Activated T-helper 2 cell treated with anti-CD3 and anti-CD28 coated beads, Interferon-gamma antibody, Interleukin-2, Interleukin-4, amounts not matched to agents 10 μg/mL and 5 μg/mL and 100 μg/mL, durations not matched to agents 14 hours and 24 hours and 36 hours (primary cell): ENCODE measurements at regions of chr7 and their contacts with region 1.

Region 1: GRCh38 chr7:104923010-104923421 is 91.0 kb upstream of the KMT2E start:
- DNase-seq: peak; percentile 61
- H3K4me3 Mint-ChIP-seq: no peak overlapping the region
- H3K27ac Mint-ChIP-seq: no peak overlapping the region
- H3K4me1 Mint-ChIP-seq: peaks cover 11% of the 10 kb centered on the region
- H3K27me3 Mint-ChIP-seq: peaks cover 4% of the 10 kb centered on the region

Region 2: GRCh38 chr7:104382616-104383015 is 540.4 kb before region 1 on chr7:
- intact Hi-C with region 1: no loop called
- DNase-seq: no peak
- H3K4me3 Mint-ChIP-seq: no peak overlapping the region
- H3K27ac Mint-ChIP-seq: no peak overlapping the region
- H3K4me1 Mint-ChIP-seq: no peaks in the 10 kb centered on the region
- H3K27me3 Mint-ChIP-seq: no peaks in the 10 kb centered on the region

Region 3: GRCh38 chr7:104643587-104644217 is 279.3 kb before region 1 on chr7:
- intact Hi-C with region 1: loop called (anchors 5 kb)
- DNase-seq: no peak
- H3K4me3 Mint-ChIP-seq: no peak overlapping the region
- H3K27ac Mint-ChIP-seq: no peak overlapping the region
- H3K4me1 Mint-ChIP-seq: no peaks in the 10 kb centered on the region
- H3K27me3 Mint-ChIP-seq: no peaks in the 10 kb centered on the region

Region 4: DNA sequence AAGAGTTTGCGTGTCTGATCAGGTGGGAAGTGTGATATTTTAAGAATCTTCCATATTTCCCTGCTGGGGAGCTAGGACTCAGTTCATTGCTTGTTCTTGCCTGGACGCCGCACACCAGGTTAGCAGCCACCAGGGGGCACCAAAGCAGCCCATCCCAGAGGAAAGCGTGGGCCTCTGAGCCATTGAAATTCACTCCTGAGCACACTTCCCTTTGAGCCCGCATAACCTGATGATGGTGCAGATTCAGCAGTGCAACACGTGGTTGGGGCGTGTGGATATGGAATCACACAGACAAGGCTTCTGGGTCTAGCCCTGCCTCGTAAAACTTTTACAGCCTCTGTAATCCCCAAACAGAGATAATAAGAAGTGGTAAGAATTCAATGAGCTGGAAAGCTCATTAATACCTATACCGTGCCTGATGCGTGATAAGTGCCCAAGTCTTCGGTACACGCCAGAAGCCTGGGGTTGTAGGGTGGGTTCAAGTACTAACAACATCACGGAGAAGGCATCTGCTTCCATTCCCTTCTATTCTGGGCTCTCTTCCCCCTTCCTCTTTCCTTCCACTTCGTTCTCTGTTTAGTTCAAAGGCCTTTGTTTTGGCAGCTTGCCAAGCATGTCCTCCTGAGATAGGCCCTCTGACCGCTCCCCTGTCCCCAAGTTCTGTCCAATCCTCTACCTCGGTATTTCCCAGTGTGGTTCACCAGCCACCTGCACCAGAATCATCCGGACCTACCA is 39.1 kb before region 1 on chr7:
- intact Hi-C with region 1: loop called (anchors 1 kb)
- DNase-seq: peak; percentile 55
- H3K4me3 Mint-ChIP-seq: no peak overlapping the region
- H3K27ac Mint-ChIP-seq: no peak overlapping the region
- H3K4me1 Mint-ChIP-seq: peaks cover 12% of the 10 kb centered on the region
- H3K27me3 Mint-ChIP-seq: peaks cover 15% of the 10 kb centered on the region

Region 5: GRCh38 chr7:105336009-105336408 is 413.0 kb after region 1 on chr7:
- intact Hi-C with region 1: loop called (anchors 5 kb)
- DNase-seq: no peak
- H3K4me3 Mint-ChIP-seq: no peak overlapping the region
- H3K27ac Mint-ChIP-seq: no peak overlapping the region
- H3K4me1 Mint-ChIP-seq: peaks cover 11% of the 10 kb centered on the region
- H3K27me3 Mint-ChIP-seq: no peaks in the 10 kb centered on the region